T-cell (primary cell): ENCODE measurements at regions of chrX and their contacts with region 1.

Region 1: GRCh38 chrX:101028562-101028961 is 23.3 kb downstream of the TRMT2B start:
- DNase-seq: no peak
- ATAC-seq: no peak
- H3K4me3 ChIP-seq: no peak overlapping the region
- H3K4me3 Mint-ChIP-seq: no peak overlapping the region
- H3K27ac ChIP-seq: no peak overlapping the region
- H3K27ac Mint-ChIP-seq: no peak overlapping the region
- H3K4me1 ChIP-seq: no peaks in the 10 kb centered on the region
- H3K4me1 Mint-ChIP-seq: peaks cover 0 to 13% (median 3%) of the 10 kb centered on the region in 3 donors
- H3K27me3 ChIP-seq: no peaks in the 10 kb centered on the region
- H3K27me3 Mint-ChIP-seq: no peaks in the 10 kb centered on the region

Region 2: DNA sequence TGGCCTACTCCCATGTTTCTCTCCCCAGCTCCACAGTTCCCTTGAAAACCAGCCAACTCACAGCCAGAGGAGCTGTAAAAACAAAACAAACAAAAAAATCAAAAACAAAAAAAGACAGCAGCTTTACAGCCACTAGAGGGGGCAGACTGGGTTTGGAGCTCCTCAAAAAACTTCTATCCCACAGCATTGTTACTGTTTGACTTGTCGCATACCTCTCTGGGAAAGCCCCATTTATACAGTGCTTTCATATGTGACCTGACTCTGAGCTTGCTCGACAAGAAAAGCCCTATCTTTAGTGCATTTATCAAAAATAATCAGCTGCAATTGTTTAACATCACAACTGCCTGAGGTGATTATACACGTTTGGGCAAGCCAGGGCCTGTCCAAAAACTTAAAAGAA is 413.6 kb before region 1 on chrX:
- CTCF ChIA-PET with region 1: no interaction called
- POLR2A ChIA-PET with region 1: interaction called in 1 of 2 experiments, 14 read pairs
- DNase-seq: peak in 1 of 35 experiments; percentile 18
- ATAC-seq: peak in 1 of 4 experiments; percentile 63
- H3K4me3 ChIP-seq: no peak overlapping the region
- H3K4me3 Mint-ChIP-seq: no peak overlapping the region
- H3K27ac ChIP-seq: no peak overlapping the region
- H3K27ac Mint-ChIP-seq: no peak overlapping the region
- H3K4me1 ChIP-seq: no peaks in the 10 kb centered on the region
- H3K4me1 Mint-ChIP-seq: no peaks in the 10 kb centered on the region
- H3K27me3 ChIP-seq: no peaks in the 10 kb centered on the region
- H3K27me3 Mint-ChIP-seq: peaks cover 8 to 48% of the 10 kb centered on the region in 2 donors